HepG2 (cell line): ENCODE measurements at regions of chr4 and their contacts with region 1.

Region 1: DNA sequence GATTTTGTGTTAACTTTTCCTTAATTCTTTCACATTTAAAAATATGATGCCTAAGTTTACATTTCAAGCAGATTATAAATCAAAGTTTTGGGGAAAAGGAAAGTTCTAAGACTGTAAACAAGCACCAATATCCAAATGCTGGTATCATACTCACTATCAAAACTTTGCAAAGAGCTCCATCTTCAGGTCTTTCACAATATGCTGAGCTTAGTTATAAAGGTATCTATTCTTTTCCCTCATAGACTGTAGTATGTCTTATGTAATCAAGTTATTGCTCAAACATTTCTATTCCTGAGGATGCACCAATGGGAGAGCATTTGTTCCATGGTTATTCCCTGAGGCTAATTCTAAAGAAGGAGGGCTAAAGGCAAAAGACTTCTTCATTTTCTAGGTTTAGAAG is 207.9 kb upstream of the FAM241A start:
- DNase-seq: peak; percentile 51
- ATAC-seq: peak; percentile 82
- H3K4me3 ChIP-seq: no peak overlapping the region
- H3K27ac ChIP-seq: no peak overlapping the region
- H3K4me1 ChIP-seq: no peaks in the 10 kb centered on the region
- H3K27me3 ChIP-seq: no peaks in the 10 kb centered on the region
- CTCF ChIP-seq: peak; percentile 50
- EP300 ChIP-seq: no peak
- POLR2A ChIP-seq: no peak
- RAD21 ChIP-seq: no peak

Region 2: GRCh38 chr4:111537871-111538270 is 399.5 kb before region 1 on chr4:
- CTCF ChIA-PET with region 1: no interaction called
- POLR2A ChIA-PET with region 1: no interaction called
- in situ Hi-C with region 1: no loop called
- intact Hi-C with region 1: no loop called
- DNase-seq: no peak
- ATAC-seq: no peak
- H3K4me3 ChIP-seq: no peak overlapping the region
- H3K27ac ChIP-seq: no peak overlapping the region
- H3K4me1 ChIP-seq: no peaks in the 10 kb centered on the region
- H3K27me3 ChIP-seq: no peaks in the 10 kb centered on the region
- CTCF ChIP-seq: no peak
- EP300 ChIP-seq: no peak
- POLR2A ChIP-seq: no peak
- RAD21 ChIP-seq: no peak

Region 3: DNA sequence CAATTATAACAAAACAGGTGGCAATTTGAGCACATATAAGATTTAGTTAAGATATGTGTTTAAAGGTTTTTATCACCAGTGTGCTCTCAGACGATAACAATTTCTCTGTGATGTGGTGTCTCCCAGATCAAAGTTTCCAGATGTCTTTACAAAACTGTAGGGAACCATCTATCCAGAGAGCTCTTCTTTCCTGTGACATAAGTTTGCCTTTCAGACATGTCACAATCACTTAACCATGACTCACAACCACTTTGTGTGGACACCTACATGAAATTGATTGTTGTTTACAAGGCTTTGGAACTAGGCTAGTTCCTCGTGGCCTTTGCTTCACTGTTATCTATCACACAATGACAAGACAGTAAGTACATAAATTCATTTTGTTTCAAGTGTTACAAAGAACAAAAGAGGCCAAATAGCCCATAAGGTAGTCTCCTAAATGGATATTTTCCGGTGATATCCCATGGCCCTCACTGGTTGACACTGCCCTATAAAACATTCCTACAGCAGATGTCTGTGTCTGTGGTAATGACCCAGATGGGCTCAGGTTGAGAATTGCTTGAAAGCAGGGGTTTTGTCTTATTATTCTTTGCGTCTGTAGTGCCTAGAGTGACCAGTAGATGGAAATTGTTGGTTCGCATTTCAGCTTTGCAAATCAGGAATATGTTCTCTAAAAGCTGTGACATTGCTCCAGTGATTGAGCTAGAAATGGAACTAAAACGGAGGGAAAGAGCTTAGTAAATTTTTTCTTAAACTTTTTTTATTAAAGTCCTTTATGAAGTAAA is 89.9 kb before region 1 on chr4:
- CTCF ChIA-PET with region 1: no interaction called
- POLR2A ChIA-PET with region 1: no interaction called
- in situ Hi-C with region 1: no loop called
- intact Hi-C with region 1: loop called (anchors 2 kb)
- DNase-seq: peak; percentile 6
- ATAC-seq: peak; percentile 84
- H3K4me3 ChIP-seq: no peak overlapping the region
- H3K27ac ChIP-seq: no peak overlapping the region
- H3K4me1 ChIP-seq: no peaks in the 10 kb centered on the region
- H3K27me3 ChIP-seq: no peaks in the 10 kb centered on the region
- CTCF ChIP-seq: 0 out of 2 replicates have a peak, but pooled peaks have one; percentile 20
- EP300 ChIP-seq: no peak
- POLR2A ChIP-seq: no peak
- RAD21 ChIP-seq: no peak

Region 4: DNA sequence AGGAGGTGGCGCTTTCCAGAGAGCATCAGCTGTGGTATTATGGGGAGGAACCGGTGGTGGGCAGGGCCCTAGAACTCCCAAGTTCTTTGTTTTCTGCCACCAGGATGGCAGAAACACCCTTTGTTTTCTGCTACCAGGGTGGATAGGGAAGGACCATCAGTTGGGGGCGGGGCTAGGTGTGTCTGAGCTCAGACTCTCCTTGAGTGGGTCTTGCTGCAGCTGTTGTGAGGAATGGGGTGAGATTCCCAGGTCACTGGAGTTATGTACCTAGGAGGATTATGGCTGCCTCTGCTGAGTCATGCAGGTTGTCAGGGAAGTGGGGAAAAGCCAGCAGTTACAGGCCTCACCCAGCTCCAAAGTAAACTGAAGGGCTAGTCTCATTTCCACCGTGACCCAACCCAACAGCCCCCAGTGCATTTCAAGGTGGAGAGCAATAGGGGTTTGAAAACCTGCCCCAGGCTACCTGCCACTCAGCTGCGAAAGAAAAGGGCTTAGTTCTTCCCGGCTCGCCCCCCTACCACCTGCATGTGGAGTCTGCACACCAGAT is 40.1 kb after region 1 on chr4:
- CTCF ChIA-PET with region 1: no interaction called
- POLR2A ChIA-PET with region 1: no interaction called
- in situ Hi-C with region 1: no loop called
- intact Hi-C with region 1: no loop called
- DNase-seq: no peak
- ATAC-seq: no peak
- H3K4me3 ChIP-seq: no peak overlapping the region
- H3K27ac ChIP-seq: no peak overlapping the region
- H3K4me1 ChIP-seq: no peaks in the 10 kb centered on the region
- H3K27me3 ChIP-seq: no peaks in the 10 kb centered on the region
- CTCF ChIP-seq: no peak
- EP300 ChIP-seq: no peak
- POLR2A ChIP-seq: no peak
- RAD21 ChIP-seq: no peak

Region 5: GRCh38 chr4:112053825-112054350 is 116.5 kb after region 1 on chr4:
- CTCF ChIA-PET with region 1: no interaction called
- POLR2A ChIA-PET with region 1: no interaction called
- in situ Hi-C with region 1: no loop called
- intact Hi-C with region 1: no loop called
- DNase-seq: no peak
- ATAC-seq: no peak
- H3K4me3 ChIP-seq: no peak overlapping the region
- H3K27ac ChIP-seq: no peak overlapping the region
- H3K4me1 ChIP-seq: no peaks in the 10 kb centered on the region
- H3K27me3 ChIP-seq: no peaks in the 10 kb centered on the region
- CTCF ChIP-seq: no peak
- EP300 ChIP-seq: no peak
- POLR2A ChIP-seq: no peak
- RAD21 ChIP-seq: no peak